ENCODE measurements at regions of chr14 and their contacts with region 1.

Region 1: DNA sequence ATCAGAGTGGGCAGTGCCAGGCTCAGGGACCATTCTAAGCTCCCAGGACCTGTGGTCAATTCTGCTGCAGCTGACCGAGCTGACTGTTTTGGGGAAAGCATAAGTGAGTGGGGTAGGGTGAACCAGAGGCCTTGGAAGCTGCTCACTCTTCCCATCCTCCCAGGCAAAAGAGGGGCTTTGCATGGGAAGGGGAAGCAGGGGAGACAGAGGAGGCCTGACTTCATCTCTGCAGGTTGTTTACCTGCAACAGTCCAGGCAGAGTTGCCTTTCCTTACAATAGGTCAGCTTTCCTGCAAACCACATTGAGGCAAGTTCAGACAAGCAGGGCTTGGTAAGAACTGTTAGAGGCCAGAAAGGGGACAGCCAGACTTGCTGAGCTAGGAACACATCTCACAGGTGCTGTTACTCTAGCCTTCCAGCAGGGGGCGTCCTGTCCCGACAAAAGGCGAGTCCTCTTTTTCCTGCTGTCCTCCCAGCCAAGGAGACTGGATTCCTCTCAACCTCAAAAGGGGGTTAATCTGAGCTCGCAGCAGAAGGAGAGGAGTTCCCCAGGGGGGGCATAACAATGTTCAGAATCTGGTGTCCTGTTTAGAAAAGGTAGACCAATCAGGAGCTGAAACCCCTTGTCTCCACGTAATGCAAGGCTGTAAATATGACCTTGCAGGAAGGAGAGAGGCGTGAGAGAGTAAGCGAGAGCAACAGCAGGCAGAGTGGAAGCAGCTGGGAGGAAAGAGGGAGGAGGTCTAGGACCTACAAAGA is 4.3 kb upstream of the DHRS2 start:
- DNase-seq: peak; percentile 69 to 97 (median 84)

Region 2: GRCh38 chr14:23421594-23421993 is 210.3 kb before region 1 on chr14:
- intact Hi-C with region 1: no loop called
- DNase-seq: no peak

Region 3: DNA sequence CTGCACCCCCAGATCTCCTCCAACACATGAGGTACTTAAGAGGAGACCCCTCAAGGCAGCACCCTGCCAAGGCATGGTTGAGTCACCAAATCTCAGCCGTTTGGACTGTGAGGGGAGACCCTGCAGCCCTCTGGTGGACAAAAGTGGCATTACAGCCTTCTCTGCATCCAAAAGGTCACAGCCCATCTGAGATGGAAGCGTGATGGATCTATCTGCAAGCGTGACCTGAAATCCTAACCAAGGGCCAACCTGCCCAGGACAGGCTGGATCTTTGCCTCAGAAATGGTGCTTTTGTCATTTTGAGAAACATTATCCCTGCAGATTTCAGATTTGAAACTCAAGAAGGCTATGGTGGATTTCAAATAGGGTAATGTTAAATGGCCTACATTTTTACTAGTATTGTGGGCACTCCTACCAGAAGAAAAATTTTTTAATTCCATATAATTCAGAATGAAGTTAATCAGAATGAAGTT is 298.0 kb after region 1 on chr14:
- intact Hi-C with region 1: loop called (anchors 1 kb)
- DNase-seq: peak; percentile 46 to 95 (median 88)

Measured in posterior cingulate gyrus (tissue), 11 donors.